ENCODE measurements at regions of chr16 and their contacts with region 1.

Region 1: DNA sequence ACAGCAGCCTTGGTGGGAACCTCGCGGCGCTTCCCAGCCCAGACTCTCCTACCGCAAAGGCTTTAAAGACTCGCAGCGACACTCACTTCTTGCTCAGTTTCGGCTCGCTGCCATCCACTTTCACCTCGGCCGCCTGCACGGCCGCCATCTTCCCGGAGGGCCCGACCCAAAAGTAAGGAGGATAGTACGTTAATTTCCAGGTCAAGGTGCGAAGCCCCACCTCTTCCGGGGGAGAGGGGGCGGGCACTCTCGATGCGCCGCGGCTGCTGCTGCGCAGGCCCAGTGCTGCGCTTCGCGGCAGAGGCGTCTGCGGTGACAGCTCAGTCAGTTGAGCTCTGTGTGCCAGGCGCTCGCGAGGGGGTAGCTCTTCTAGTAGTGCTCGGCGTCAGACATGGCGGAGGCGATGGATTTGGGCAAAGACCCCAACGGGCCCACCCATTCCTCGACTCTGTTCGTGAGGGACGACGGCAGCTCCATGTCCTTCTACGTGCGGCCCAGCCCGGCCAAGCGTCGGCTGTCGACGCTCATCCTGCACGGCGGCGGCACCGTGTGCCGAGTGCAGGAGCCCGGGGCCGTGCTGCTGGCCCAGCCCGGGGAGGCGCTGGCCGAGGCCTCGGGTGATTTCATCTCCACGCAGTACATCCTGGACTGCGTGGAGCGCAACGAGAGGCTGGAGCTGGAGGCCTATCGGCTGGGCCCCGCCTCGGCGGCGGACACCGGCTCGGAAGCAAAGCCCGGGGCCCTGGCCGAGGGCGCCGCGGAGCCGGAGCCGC is at the starts of genes KARS1 and TERF2IP:
- DNase-seq: peak; percentile 96
- ATAC-seq: peak; percentile 85
- H3K4me3 ChIP-seq: peak within 1 kb of the TSS; percentile 73 to 96 (median 85)
- H3K4me3 Mint-ChIP-seq: peak within 1 kb of the TSS; percentile 97
- H3K27ac ChIP-seq: peak within 1 kb of the TSS; percentile 85 to 87
- H3K27ac Mint-ChIP-seq: peak within 1 kb of the TSS; percentile 99
- H3K4me1 ChIP-seq: peaks cover 54 to 55% of the 10 kb centered on the region in 2 donors
- H3K4me1 Mint-ChIP-seq: peaks cover 53% of the 10 kb centered on the region
- H3K27me3 ChIP-seq: no peaks in the 10 kb centered on the region
- H3K27me3 Mint-ChIP-seq: no peaks in the 10 kb centered on the region
- CTCF ChIP-seq: no peak
- total RNA-seq, gene KARS1: 102 and 114 TPM in 2 replicates
- total RNA-seq, gene TERF2IP: 74.6 and 75.2 TPM in 2 replicates

Region 2: GRCh38 chr16:74984535-74985296 is 663.0 kb before region 1 on chr16 and contains the start of gene WDR59:
- CTCF ChIA-PET with region 1: no interaction called
- POLR2A ChIA-PET with region 1: no interaction called
- intact Hi-C with region 1: loop called (anchors 1 kb)
- DNase-seq: peak; percentile 98
- ATAC-seq: peak; percentile 99
- H3K4me3 ChIP-seq: peak within 1 kb of the TSS; percentile 56 to 98 (median 83)
- H3K4me3 Mint-ChIP-seq: peak within 1 kb of the TSS; percentile 96
- H3K27ac ChIP-seq: peak within 1 kb of the TSS; percentile 47 to 72
- H3K27ac Mint-ChIP-seq: peak within 1 kb of the TSS; percentile 92
- H3K4me1 ChIP-seq: peaks cover 0 to 15% of the 10 kb centered on the region in 2 donors
- H3K4me1 Mint-ChIP-seq: peaks cover 12% of the 10 kb centered on the region
- H3K27me3 ChIP-seq: no peaks in the 10 kb centered on the region
- H3K27me3 Mint-ChIP-seq: no peaks in the 10 kb centered on the region
- CTCF ChIP-seq: no peak
- total RNA-seq, gene WDR59: 127 and 136 TPM in 2 replicates

Region 3: DNA sequence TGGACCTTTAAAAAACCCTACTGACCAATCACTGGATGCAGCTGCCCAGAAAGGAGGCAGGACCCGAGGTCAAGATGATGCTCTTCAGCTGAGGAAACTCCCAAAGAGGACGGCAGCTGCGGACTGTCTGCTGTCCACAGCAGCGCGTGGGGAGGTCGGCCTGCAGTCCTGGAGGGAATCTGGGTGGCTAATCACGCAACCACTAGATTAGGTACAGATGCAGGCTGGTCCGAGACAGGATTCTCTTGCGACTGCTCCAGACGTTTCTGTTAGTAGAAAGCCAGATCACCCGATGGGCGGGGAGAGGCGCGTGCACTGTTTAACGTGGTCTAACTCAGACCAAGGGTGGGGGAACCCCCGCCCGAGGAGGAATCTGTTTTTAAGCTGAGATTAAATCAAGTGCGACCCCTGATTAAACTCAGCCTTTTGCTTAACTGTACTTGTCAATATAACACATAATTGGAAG is 449.5 kb before region 1 on chr16:
- CTCF ChIA-PET with region 1: interaction called, 12 read pairs
- POLR2A ChIA-PET with region 1: no interaction called
- intact Hi-C with region 1: no loop called
- DNase-seq: no peak
- ATAC-seq: no peak
- H3K4me3 ChIP-seq: no peak overlapping the region
- H3K4me3 Mint-ChIP-seq: no peak overlapping the region
- H3K27ac ChIP-seq: no peak overlapping the region
- H3K27ac Mint-ChIP-seq: no peak overlapping the region
- H3K4me1 ChIP-seq: peaks cover 11 to 12% of the 10 kb centered on the region in 2 donors
- H3K4me1 Mint-ChIP-seq: peaks cover 10% of the 10 kb centered on the region
- H3K27me3 ChIP-seq: peaks cover 0 to 54% (median 12%) of the 10 kb centered on the region in 4 experiments
- H3K27me3 Mint-ChIP-seq: peaks cover 37% of the 10 kb centered on the region
- CTCF ChIP-seq: no peak

Region 4: DNA sequence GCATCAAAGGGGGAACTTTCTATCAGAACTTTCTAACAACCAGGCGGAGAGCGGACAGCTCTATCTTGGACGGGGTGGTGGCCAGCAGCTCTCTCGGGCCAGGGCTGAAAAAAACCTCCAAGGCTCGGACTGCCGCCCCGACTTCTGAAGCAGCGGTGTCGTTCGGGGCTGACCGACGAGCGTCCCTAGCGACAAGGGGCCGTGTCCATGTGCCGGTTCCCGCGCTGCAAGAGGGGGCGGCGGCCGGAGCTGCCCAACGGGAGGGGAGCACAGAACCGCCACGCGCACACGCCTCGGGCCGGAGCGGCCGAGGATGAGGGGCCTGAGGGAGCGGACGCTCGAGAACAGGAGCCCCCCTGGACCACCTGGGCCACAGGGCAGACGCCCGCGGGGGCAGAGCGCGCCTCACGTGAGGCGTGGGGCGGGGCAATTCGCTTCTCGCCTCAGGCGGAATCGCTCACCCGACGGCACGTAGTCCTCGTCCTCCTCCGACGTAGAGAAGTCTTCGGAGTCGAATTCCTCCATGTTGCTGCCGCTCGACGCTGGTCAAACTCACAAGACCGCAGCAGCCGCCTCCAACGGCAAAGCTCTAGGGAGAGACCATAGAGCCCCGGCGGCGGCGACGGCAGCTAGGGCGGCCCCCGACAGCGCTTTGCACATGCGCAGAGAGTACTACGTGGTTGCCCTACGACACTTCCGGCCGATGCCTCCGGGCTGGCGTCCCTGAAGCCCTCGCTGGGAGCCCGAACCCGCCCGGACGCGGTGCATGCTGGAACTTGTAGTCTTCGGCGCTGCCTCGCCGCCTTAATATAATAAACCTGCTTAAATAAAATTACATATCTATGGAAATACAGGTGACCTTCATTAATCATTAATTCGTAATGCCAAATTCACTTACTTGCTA is 214.6 kb before region 1 on chr16 and contains the start of gene CFDP1:
- CTCF ChIA-PET with region 1: interaction called, 5 read pairs
- POLR2A ChIA-PET with region 1: interaction called, 14 read pairs
- intact Hi-C with region 1: loop called (anchors 1 kb)
- DNase-seq: peak; percentile 98
- ATAC-seq: peak; percentile 86
- H3K4me3 ChIP-seq: peak within 1 kb of the TSS; percentile 94 to 100 (median 95)
- H3K4me3 Mint-ChIP-seq: peak within 1 kb of the TSS; percentile 88
- H3K27ac ChIP-seq: peak within 1 kb of the TSS; percentile 91 to 99
- H3K27ac Mint-ChIP-seq: peak within 1 kb of the TSS; percentile 95
- H3K4me1 ChIP-seq: peaks cover 7 to 15% of the 10 kb centered on the region in 2 donors
- H3K4me1 Mint-ChIP-seq: peaks cover 20% of the 10 kb centered on the region
- H3K27me3 ChIP-seq: no peaks in the 10 kb centered on the region
- H3K27me3 Mint-ChIP-seq: no peaks in the 10 kb centered on the region
- CTCF ChIP-seq: no peak
- total RNA-seq, gene CFDP1: 39.5 and 42.8 TPM in 2 replicates

Region 5: DNA sequence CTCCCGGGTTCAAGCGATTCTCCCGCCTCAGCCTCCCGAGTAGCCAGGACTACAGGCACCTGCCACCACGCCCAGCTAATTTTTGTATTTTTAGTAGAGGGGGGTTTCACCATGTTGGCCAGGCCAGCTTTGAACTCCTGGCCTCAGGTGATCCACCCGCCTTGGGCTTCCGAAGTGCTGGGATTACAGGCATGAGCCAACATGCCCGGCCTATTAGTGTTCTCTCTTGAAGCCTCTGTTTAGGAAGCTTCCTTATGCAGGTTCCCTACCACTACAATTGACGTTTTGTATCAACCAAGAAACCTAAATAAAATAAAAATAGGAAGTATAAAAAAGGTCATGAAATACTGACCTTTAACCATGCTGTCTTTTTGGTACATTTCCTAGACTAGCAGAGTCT is 127.8 kb before region 1 on chr16:
- CTCF ChIA-PET with region 1: interaction called, 16 read pairs
- POLR2A ChIA-PET with region 1: interaction called, 6 read pairs
- intact Hi-C with region 1: loop called (anchors 1 kb)
- DNase-seq: no peak
- ATAC-seq: no peak
- H3K4me3 ChIP-seq: no peak overlapping the region
- H3K4me3 Mint-ChIP-seq: no peak overlapping the region
- H3K27ac ChIP-seq: no peak overlapping the region
- H3K27ac Mint-ChIP-seq: no peak overlapping the region
- H3K4me1 ChIP-seq: peaks cover 0 to 13% of the 10 kb centered on the region in 2 donors
- H3K4me1 Mint-ChIP-seq: peaks cover 12% of the 10 kb centered on the region
- H3K27me3 ChIP-seq: no peaks in the 10 kb centered on the region
- H3K27me3 Mint-ChIP-seq: no peaks in the 10 kb centered on the region
- CTCF ChIP-seq: no peak

Region 6: DNA sequence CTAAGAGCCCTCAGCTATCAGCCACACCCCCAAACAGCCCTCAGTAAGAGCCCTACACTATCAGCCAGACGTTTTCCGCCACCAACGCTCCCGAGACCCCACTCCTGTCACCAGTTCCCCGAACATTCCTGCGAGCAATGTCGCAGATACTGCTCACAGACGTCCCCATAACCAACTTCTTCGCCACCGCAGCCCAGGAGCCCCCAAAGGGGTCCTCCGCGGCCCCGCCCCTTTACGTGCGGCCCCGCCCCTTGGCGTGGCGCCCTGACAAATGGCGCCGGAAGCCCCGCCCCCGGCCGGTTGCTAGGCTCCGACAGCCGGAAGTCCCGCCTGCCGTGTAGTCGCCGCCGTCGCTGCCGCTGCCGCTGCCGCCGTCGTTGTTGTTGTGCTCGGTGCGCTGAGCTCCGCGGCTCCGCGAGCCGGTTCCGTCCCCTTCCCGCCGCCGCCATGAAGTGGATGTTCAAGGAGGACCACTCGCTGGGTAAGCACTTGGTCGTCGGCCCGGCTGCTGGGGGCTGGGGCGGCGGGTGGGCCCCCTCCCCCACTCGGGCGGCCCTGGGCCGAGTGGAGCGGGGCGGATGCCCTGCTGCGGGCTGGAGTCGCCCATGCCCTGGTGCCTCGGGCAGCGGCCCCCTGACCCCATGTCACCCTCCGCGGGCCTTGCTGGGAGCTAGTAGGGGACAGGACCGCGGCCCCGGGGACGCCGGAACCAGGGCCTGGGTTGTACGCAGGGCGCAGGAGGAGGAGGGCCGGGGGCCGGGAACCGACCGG is 81.5 kb before region 1 on chr16 and contains the start of gene GABARAPL2:
- CTCF ChIA-PET with region 1: no interaction called
- POLR2A ChIA-PET with region 1: interaction called, 15 read pairs
- intact Hi-C with region 1: loop called (anchors 1 kb)
- DNase-seq: peak; percentile 97
- ATAC-seq: peak; percentile 70
- H3K4me3 ChIP-seq: peak within 1 kb of the TSS; percentile 75 to 96 (median 95)
- H3K4me3 Mint-ChIP-seq: peak within 1 kb of the TSS; percentile 100
- H3K27ac ChIP-seq: peak within 1 kb of the TSS; percentile 96 to 99
- H3K27ac Mint-ChIP-seq: peak within 1 kb of the TSS; percentile 97
- H3K4me1 ChIP-seq: peaks cover 44 to 61% of the 10 kb centered on the region in 2 donors
- H3K4me1 Mint-ChIP-seq: peaks cover 53% of the 10 kb centered on the region
- H3K27me3 ChIP-seq: no peaks in the 10 kb centered on the region
- H3K27me3 Mint-ChIP-seq: no peaks in the 10 kb centered on the region
- CTCF ChIP-seq: no peak
- total RNA-seq, gene GABARAPL2: 84.8 and 84.9 TPM in 2 replicates

Region 7: DNA sequence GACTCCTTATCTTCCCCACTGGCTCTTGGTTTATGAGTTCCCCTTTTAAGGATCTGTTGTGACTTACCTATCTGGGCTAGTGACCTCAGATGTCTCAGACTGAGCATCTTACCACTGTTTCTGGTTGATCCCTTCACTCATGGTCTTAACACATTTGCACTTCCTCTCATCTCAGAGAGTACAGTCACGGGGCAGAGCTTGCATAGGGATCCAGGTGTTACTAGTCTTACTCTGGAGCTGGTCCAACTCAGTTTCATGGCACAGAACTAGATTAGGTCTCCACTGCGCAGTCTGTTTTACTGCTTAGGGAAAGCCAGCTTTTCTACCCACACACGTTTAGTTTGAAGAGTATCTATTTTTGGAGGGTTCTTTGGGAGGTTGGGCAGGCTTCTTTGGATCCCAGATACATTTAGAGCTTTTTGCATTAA is 71.3 kb before region 1 on chr16:
- CTCF ChIA-PET with region 1: no interaction called
- POLR2A ChIA-PET with region 1: no interaction called
- intact Hi-C with region 1: no loop called
- DNase-seq: no peak
- ATAC-seq: no peak
- H3K4me3 ChIP-seq: no peak overlapping the region
- H3K4me3 Mint-ChIP-seq: no peak overlapping the region
- H3K27ac ChIP-seq: peak overlapping the region in 1 of 2 donors; percentile 54
- H3K27ac Mint-ChIP-seq: peak overlapping the region; percentile 47
- H3K4me1 ChIP-seq: peaks cover 18 to 67% of the 10 kb centered on the region in 2 donors
- H3K4me1 Mint-ChIP-seq: peaks cover 59% of the 10 kb centered on the region
- H3K27me3 ChIP-seq: no peaks in the 10 kb centered on the region
- H3K27me3 Mint-ChIP-seq: no peaks in the 10 kb centered on the region
- CTCF ChIP-seq: no peak

Region 8: GRCh38 chr16:75588711-75589110 is 59.0 kb before region 1 on chr16:
- CTCF ChIA-PET with region 1: no interaction called
- POLR2A ChIA-PET with region 1: no interaction called
- intact Hi-C with region 1: no loop called
- DNase-seq: no peak
- ATAC-seq: no peak
- H3K4me3 ChIP-seq: no peak overlapping the region
- H3K4me3 Mint-ChIP-seq: no peak overlapping the region
- H3K27ac ChIP-seq: no peak overlapping the region
- H3K27ac Mint-ChIP-seq: no peak overlapping the region
- H3K4me1 ChIP-seq: peaks cover 19% of the 10 kb centered on the region in 2 donors
- H3K4me1 Mint-ChIP-seq: peaks cover 23% of the 10 kb centered on the region
- H3K27me3 ChIP-seq: no peaks in the 10 kb centered on the region
- H3K27me3 Mint-ChIP-seq: no peaks in the 10 kb centered on the region
- CTCF ChIP-seq: no peak